ENCODE measurements at regions of chr6 and their contacts with region 1.

Region 1: GRCh38 chr6:25777031-25777430 is 22.5 kb downstream of the SLC17A4 start:
- DNase-seq: no peak
- H3K4me3 ChIP-seq: no peak overlapping the region
- H3K27ac ChIP-seq: no peak overlapping the region
- H3K4me1 ChIP-seq: no peaks in the 10 kb centered on the region
- H3K27me3 ChIP-seq: peaks cover 2% of the 10 kb centered on the region
- CTCF ChIP-seq: no peak

Region 2: DNA sequence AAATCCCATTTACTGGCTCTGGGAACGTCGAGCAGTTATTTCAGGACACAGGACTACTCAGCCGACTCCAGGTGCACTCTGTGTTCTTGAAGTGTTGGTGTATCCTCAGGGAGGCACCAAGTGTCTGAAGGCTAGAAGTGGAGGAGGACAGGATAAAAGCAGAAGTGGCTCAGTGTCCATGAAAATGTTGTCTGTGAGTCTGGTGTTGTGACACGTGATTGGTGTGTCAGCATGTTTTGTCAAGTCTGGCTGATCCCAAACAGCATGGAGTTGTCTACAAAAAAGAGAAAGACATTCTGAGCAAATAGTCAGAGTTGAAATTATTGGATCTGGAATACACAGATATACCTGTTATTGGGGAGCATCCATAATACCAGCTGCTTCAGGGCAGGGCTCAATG is 94.7 kb before region 1 on chr6:
- dilution Hi-C with region 1: loop called (anchors 5 kb)
- DNase-seq: no peak
- H3K4me3 ChIP-seq: no peak overlapping the region
- H3K27ac ChIP-seq: no peak overlapping the region
- H3K4me1 ChIP-seq: no peaks in the 10 kb centered on the region
- H3K27me3 ChIP-seq: no peaks in the 10 kb centered on the region
- CTCF ChIP-seq: no peak

Measured in keratinocyte (primary cell).